HCT116 (cell line): ENCODE measurements at regions of chr4 and their contacts with region 1.

Region 1: DNA sequence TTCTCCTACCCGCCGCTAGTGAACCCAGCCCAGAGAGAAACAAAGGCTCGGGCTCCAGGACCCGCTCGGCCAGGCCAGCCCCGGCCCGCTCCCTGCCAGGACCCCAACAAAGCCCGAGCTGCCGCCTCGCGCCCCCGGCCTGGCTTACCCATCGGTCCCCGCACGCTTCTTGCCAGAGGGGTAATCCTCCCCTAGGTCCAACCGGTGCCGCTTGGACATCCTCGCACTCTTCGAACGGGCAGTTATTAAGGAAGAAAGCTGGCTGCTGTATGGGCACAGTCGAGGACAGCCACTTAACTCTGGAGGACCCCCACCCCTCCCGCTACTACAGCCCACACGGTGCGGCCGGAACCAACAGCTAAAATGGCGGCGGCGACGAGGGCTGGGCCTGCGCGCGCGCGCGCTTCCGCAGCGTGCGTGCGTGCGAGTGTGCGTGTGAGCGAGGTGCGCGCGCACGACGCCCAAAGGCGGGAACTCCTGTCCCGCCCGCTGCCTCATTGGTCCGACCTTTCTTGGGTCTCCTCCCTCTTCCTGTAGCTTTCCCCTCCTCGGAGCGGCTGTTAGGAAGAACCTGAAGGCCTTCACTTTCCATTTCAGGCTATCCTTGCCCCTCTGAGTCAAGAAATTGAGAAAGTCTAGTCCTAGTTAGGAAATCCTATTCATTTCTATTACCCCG is at the start of gene DHX15:
- DNase-seq: peak; percentile 95
- ATAC-seq: peak; percentile 91
- H3K4me3 ChIP-seq: peak within 1 kb of the TSS; percentile 87 to 94
- H3K27ac ChIP-seq: peak within 1 kb of the TSS; percentile 94
- H3K4me1 ChIP-seq: peaks cover 8 to 29% of the 10 kb centered on the region in 2 experiments
- H3K27me3 ChIP-seq: no peaks in the 10 kb centered on the region
- CTCF ChIP-seq: no peak
- POLR2A ChIP-seq: peak; percentile 83
- RAD21 ChIP-seq: no peak
- total RNA-seq, gene DHX15: 195 TPM

Region 2: DNA sequence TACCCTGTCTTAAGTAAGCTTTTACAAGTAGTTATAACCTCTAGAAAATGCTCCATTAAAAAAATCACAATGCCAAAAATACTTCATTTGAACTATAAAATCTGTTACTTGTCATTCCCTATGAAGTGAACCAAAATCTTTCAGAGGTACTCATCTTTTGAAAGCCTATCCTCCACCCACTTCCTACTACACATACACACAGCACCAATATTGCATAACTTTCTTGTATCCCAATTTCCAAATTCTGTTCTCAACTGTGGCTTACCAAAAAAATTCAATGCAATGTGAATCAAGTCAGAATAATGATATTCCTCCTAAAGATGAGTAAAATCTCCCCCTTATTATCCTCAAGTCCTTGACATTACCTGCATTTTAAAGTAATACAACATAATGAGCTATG is 15.9 kb before region 1 on chr4:
- CTCF ChIA-PET with region 1: no interaction called
- POLR2A ChIA-PET with region 1: interaction called, 10 read pairs
- RAD21 ChIA-PET with region 1: no interaction called
- intact Hi-C with region 1: no loop called
- DNase-seq: no peak
- ATAC-seq: no peak
- H3K4me3 ChIP-seq: no peak overlapping the region
- H3K27ac ChIP-seq: no peak overlapping the region
- H3K4me1 ChIP-seq: no peaks in the 10 kb centered on the region
- H3K27me3 ChIP-seq: no peaks in the 10 kb centered on the region
- CTCF ChIP-seq: no peak
- POLR2A ChIP-seq: no peak
- RAD21 ChIP-seq: no peak

Region 3: DNA sequence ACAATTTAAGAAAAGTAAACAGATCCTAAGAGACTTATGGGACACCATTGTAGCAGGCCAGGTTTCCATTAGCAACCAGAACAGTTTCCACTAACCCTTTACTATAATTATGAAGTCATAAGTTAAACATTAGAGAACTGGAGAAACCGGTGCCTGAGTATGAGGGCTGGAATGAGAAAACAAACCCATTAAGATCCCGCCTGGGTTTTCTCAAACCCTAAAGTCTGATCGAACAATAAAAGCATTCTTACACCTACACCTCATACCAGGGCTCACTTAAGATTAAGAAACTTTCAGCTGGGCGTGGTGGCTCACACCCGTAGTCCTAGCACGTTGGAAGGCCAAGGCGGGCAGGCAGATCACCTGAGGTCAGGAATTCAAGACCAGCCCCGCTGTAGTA is 13.7 kb after region 1 on chr4:
- CTCF ChIA-PET with region 1: no interaction called
- POLR2A ChIA-PET with region 1: interaction called, 7 read pairs
- RAD21 ChIA-PET with region 1: no interaction called
- intact Hi-C with region 1: loop called (anchors 1 kb)
- DNase-seq: peak; percentile 58
- ATAC-seq: peak; percentile 85
- H3K4me3 ChIP-seq: peak overlapping the region in 1 of 2 experiments; percentile 19; a peak in 1 of 4 replicates
- H3K27ac ChIP-seq: peak overlapping the region; percentile 7; the same call in 1 of the 2 replicates
- H3K4me1 ChIP-seq: peaks cover 6 to 35% of the 10 kb centered on the region in 2 experiments; a peak in 3 of 4 replicates
- H3K27me3 ChIP-seq: no peaks in the 10 kb centered on the region
- CTCF ChIP-seq: no peak
- POLR2A ChIP-seq: no peak
- RAD21 ChIP-seq: no peak

Region 4: GRCh38 chr4:24686871-24687680 is 102.8 kb after region 1 on chr4:
- CTCF ChIA-PET with region 1: no interaction called
- POLR2A ChIA-PET with region 1: no interaction called
- RAD21 ChIA-PET with region 1: interaction called in 1 of 2 experiments, 3 read pairs
- intact Hi-C with region 1: loop called (anchors 2 kb)
- DNase-seq: peak; percentile 36
- ATAC-seq: peak; percentile 95
- H3K4me3 ChIP-seq: peak overlapping the region in 1 of 2 experiments; percentile 12; a peak in 1 of 4 replicates
- H3K27ac ChIP-seq: no peak overlapping the region
- H3K4me1 ChIP-seq: peaks cover 0 to 5% of the 10 kb centered on the region in 2 experiments; a peak in 1 of 4 replicates
- H3K27me3 ChIP-seq: peaks cover 9% of the 10 kb centered on the region; the same call in 1 of the 2 replicates
- CTCF ChIP-seq: peak; percentile 83 to 90 (median 83); a peak in 5 of 6 replicates
- POLR2A ChIP-seq: no peak
- RAD21 ChIP-seq: peak; percentile 82

Region 5: DNA sequence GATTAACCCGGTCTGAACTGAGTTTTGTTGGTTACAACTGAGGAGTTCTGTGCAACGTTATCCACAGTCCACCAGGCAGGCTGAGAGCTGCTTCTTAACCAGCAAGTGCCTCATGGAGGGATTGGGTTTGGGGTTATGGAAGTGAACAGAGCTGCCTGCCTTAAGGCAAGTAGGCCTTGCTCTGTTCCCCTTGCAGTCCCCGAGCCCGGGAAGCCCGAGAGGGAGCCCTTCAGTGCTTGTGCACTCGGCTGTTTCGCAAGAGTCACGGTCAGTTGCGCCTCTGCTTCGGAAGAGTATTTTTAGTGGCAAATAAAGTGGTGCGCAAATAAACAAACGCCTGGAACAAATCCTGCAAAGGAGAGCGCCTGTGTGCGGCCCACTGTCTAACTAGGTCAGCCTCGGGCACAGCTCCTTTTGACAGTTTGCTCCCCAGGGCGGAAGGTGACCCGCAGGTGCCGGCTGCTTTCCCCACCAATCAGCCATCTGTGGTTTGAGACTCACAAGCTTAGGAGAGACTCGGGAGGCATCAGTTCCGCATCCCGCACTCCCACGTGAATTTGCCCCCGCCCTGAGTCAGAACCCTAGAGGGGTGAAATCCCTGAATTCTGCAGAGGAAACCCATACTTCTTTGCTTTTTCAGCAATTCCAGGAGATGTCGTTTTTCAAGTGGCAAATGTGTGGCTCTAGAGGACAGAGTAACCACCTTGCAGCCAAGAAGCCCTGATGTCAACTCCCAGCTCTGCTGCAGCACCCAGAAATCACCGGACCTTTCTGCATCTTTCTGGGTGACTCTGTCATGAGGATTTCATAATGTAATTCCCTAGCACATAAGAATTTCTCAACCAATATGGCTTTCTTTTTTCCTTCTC is 389.7 kb after region 1 on chr4:
- CTCF ChIA-PET with region 1: no interaction called
- POLR2A ChIA-PET with region 1: no interaction called
- RAD21 ChIA-PET with region 1: no interaction called
- intact Hi-C with region 1: no loop called
- DNase-seq: no peak
- ATAC-seq: no peak
- H3K4me3 ChIP-seq: no peak overlapping the region
- H3K27ac ChIP-seq: no peak overlapping the region
- H3K4me1 ChIP-seq: no peaks in the 10 kb centered on the region
- H3K27me3 ChIP-seq: no peaks in the 10 kb centered on the region
- CTCF ChIP-seq: no peak
- POLR2A ChIP-seq: no peak
- RAD21 ChIP-seq: no peak